GM23248 (cell line): ENCODE measurements at regions of chr1 and their contacts with region 1.

Region 1: DNA sequence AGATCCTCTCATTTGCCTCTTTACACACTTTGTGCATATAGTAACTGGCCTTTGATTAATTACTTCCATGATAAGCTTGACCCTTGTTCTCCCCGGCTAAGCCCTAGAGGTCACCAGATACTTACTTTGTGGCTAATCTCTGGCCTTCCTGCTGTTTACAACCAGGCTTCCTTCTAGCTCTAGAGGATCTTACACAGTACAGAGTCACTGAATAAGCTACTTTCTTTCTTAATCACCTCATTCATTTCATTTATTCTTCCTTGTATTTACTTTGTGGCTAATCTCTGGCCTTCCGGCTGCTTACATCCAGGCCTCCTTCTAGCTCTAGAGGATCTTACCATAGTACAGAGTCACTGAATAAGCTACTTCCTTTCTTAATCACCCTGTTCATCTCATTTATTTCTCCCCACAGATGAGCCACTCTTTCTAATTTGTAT is 144.3 kb upstream of the C1orf21 start:
- DNase-seq: peak; percentile 58
- H3K4me3 ChIP-seq: no peak overlapping the region
- H3K27ac ChIP-seq: no peak overlapping the region
- H3K4me1 ChIP-seq: peaks cover 13% of the 10 kb centered on the region
- H3K27me3 ChIP-seq: no peaks in the 10 kb centered on the region; the same call in 1 of the 2 replicates

Region 2: GRCh38 chr1:184555665-184556641 is 313.4 kb after region 1 on chr1:
- in situ Hi-C with region 1: loop called (anchors 10 kb)
- DNase-seq: no peak
- H3K4me3 ChIP-seq: no peak overlapping the region
- H3K27ac ChIP-seq: no peak overlapping the region
- H3K4me1 ChIP-seq: no peaks in the 10 kb centered on the region
- H3K27me3 ChIP-seq: no peaks in the 10 kb centered on the region